Head of caudate nucleus (tissue), 42 donors: ENCODE measurements at regions of chr12 and their contacts with region 1.

Region 1: GRCh38 chr12:120356567-120357030 is 12.4 kb downstream of the MSI1 start:
- DNase-seq: peak; percentile 77 to 93 (median 84)

Region 2: GRCh38 chr12:119528241-119528640 is 828.4 kb before region 1 on chr12:
- intact Hi-C with region 1: no loop called
- DNase-seq: no peak

Region 3: DNA sequence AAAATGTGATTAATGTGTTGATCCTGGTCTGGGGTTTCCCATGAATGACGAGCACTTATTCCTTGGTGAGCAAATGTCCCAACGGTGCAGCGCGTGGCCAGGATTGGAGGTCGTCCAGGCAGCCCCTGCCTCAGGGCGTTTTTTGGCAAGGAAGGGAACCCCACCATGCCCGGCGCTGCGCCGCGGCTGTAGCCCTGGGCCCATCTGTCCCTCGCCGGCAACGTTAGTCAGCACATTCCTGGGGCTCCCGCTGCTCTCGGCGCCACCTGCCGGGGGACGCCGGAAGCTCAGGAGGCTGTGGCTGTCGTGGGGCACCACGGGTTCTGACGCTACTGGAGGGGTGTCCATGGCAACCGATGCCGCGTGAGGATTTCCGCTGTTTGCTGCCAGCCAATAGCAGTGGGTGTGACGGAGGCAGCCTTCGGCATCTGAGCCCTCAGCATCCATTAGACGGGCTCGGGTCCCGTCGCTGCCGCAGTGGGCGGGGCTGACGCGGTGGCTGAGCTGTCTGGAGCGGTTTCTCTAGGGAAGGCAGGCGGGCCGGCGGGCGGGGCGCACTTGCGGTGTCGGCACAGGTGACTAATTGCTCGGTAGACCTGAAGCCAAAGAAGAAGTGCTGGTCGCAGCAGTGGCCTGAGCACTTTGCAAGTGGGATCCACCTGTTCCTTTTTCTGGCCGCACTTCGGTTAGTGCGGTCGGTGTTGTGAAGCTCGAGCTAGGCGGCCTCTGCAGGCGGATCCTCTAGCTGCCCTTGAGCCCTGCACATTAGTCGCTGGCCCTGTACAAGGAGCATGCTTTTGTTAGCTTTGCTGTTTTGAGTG is 269.6 kb before region 1 on chr12:
- intact Hi-C with region 1: no loop called
- DNase-seq: peak; percentile 99 to 100 (median 100)

Region 4: DNA sequence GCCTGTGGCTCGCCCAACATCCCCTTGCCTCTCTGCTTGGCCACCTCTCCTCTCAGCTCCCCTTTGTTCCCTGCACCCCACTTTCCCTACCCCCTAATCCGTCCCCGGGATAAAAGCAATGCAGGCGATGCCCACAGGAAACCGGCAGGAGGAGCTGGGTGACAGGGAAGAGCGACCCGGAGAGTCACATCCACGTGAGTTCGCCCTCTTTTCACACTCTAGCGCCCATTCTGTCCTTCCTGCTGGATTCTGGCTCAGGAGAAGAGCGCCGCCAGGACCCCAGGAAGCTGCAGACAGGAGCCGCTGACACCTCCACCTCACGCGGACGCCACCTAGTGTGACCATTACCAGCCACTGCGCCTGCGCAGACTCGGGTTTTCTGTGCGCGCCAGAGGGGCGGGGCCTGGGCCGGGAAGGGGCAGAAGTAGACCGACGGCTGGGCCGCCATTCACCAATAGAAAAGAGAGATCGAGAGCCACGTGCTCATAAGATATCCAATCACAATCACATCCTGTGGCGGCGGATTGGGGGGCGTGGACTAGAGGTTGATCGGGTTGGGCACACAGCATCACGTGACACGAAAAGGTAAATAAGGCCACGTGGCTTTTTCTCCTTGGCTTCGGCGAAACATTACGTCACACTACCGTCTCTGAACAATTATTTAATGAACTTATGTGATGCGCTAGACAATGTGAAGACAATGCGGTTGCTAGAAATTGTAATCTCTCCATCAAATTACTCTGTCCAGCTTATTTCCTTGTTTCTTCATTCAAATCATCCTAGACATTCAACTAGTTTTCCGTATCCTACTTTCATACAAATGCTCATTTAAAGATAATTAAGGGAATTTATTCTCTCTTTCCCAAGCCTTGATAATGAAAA is 39.1 kb before region 1 on chr12:
- intact Hi-C with region 1: no loop called
- DNase-seq: peak; percentile 97 to 100 (median 99)

Region 5: GRCh38 chr12:120404271-120404670 is 47.7 kb after region 1 on chr12:
- intact Hi-C with region 1: no loop called
- DNase-seq: no peak

Region 6: GRCh38 chr12:120432772-120433525 is 76.3 kb after region 1 on chr12:
- intact Hi-C with region 1: loop called (anchors 2 kb)
- DNase-seq: peak in 21 of 42 donors; percentile 15 to 56 (median 35)